ENCODE measurements at regions of chr19 and their contacts with region 1.

Region 1: DNA sequence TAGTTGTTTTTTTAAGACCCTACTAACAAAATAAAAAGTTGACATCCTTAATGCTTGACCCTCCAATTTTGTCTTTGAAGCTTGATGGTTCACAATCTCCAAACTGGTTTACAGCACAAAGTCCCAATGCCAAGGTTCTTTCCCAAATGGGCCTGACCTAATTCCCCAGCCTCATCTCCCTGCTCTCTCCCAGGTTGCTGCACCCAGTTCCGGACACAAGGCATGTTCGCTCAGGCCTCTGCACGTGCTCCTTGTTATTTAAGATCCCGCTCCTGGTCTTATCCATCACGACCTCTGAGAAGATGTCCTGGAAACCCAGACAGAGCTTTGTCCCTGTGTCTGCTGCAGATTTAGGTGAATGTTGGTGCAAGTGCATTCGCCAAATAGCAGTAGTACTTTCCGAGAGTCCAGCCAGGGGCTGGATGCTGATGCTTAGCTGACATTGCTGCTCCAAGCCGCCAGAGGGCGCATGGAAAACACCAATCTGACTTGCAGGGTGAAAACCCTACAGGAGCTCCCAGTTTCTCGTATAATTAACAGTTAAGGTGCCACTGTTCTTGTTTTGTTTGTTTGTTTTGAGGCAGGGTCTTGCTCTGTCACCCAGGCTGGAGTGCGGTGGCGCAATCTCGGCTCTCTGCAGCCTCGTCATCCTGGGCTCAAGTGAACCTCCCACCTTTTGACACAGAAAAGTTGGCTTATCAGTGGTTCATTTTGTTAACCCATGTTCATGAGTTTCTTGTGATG is 18.5 kb downstream of the LYPD3 start:
- DNase-seq: peak; percentile 65
- ATAC-seq: peak; percentile 95
- H3K4me3 ChIP-seq: no peak overlapping the region
- H3K27ac ChIP-seq: no peak overlapping the region
- H3K4me1 ChIP-seq: 0 out of 2 replicates have a peak, but pooled peaks cover 2% of the 10 kb centered on the region
- H3K27me3 ChIP-seq: no peaks in the 10 kb centered on the region
- CTCF ChIP-seq: peak; percentile 94
- POLR2A ChIP-seq: no peak
- RAD21 ChIP-seq: peak; percentile 94

Region 2: GRCh38 chr19:43503501-43504425 is 56.8 kb after region 1 on chr19:
- CTCF ChIA-PET with region 1: interaction called, 4 read pairs
- POLR2A ChIA-PET with region 1: interaction called, 5 read pairs
- dilution Hi-C with region 1: no loop called
- in situ Hi-C with region 1: no loop called
- intact Hi-C with region 1: loop called (anchors 1 kb)
- DNase-seq: peak; percentile 84
- ATAC-seq: peak; percentile 99
- H3K4me3 ChIP-seq: peak overlapping the region; percentile 88
- H3K27ac ChIP-seq: peak overlapping the region; percentile 82
- H3K4me1 ChIP-seq: peaks cover 4% of the 10 kb centered on the region; the same call in 1 of the 2 replicates
- H3K27me3 ChIP-seq: no peaks in the 10 kb centered on the region
- CTCF ChIP-seq: 0 out of 2 replicates have a peak, but pooled peaks have one; percentile 6
- POLR2A ChIP-seq: peak; percentile 60
- RAD21 ChIP-seq: no peak

Region 3: DNA sequence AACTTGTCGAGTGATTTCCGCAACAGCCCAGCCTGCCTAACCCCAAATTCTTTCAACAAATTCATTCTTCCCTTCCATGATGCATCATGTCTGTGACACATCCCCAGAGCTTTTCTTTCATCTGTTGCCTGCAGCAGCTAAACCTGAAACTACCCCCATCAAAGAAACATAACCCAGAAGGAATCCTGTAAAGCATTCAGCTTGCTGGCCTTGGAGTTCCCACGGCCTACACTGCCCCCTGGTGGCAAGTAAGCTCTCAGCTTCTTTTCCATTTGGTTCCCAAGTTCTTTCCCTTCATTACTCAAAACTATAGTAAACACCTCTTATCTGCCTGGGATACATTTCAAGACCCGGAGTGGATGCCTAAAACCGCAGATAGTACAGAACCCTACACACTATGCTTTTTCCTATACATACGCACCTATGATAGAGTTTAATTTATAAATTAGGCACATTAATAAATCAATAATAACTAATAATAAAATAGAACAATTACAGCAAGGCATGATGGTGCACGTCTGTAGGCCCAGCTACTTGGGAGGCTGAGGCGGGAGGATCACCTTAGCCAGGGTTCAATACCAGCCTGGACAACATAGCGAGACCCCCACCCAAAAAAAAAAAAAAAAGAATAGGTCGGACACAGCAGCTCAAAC is 72.6 kb after region 1 on chr19:
- CTCF ChIA-PET with region 1: interaction called, 23 read pairs
- POLR2A ChIA-PET with region 1: interaction called, 13 read pairs
- dilution Hi-C with region 1: no loop called
- in situ Hi-C with region 1: loop called (anchors 5 kb)
- intact Hi-C with region 1: loop called (anchors 1 kb)
- DNase-seq: peak; percentile 97
- ATAC-seq: peak; percentile 91
- H3K4me3 ChIP-seq: no peak overlapping the region
- H3K27ac ChIP-seq: no peak overlapping the region
- H3K4me1 ChIP-seq: no peaks in the 10 kb centered on the region
- H3K27me3 ChIP-seq: no peaks in the 10 kb centered on the region
- CTCF ChIP-seq: peak; percentile 98
- POLR2A ChIP-seq: no peak
- RAD21 ChIP-seq: peak; percentile 98

Region 4: GRCh38 chr19:43526884-43527859 is 80.3 kb after region 1 on chr19 and contains the start of gene ETHE1:
- CTCF ChIA-PET with region 1: interaction called, 13 read pairs
- POLR2A ChIA-PET with region 1: no interaction called
- dilution Hi-C with region 1: no loop called
- in situ Hi-C with region 1: loop called (anchors 5 kb)
- intact Hi-C with region 1: no loop called
- DNase-seq: peak; percentile 31
- ATAC-seq: peak; percentile 90
- H3K4me3 ChIP-seq: peak within 1 kb of the TSS; percentile 96
- H3K27ac ChIP-seq: peak within 1 kb of the TSS; percentile 78
- H3K4me1 ChIP-seq: peaks cover 4% of the 10 kb centered on the region
- H3K27me3 ChIP-seq: no peaks in the 10 kb centered on the region
- CTCF ChIP-seq: no peak
- POLR2A ChIP-seq: peak; percentile 60
- RAD21 ChIP-seq: no peak
- total RNA-seq, gene ETHE1: 141 and 161 TPM in 2 replicates

Region 5: DNA sequence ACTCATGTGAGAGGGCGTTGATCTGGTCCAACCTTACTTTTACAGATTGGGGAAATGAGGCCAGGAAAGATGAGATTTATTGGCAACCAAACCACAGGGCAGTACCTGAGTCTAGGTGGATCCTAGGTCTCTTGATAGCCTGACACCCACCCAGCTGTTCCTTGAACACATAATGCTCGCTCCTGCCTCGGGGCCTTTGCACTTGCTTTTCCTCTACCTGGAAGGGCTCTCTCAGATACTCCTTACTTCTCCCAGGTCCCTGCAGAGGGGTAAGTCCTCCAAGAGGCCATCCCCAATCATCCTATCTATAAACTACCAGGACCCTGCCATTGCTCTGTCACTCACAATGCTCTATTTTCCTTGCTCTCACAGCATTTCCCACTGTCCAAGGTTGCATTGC is 93.5 kb after region 1 on chr19:
- CTCF ChIA-PET with region 1: no interaction called
- POLR2A ChIA-PET with region 1: no interaction called
- dilution Hi-C with region 1: no loop called
- in situ Hi-C with region 1: no loop called
- intact Hi-C with region 1: no loop called
- DNase-seq: no peak
- ATAC-seq: no peak
- H3K4me3 ChIP-seq: no peak overlapping the region
- H3K27ac ChIP-seq: no peak overlapping the region
- H3K4me1 ChIP-seq: no peaks in the 10 kb centered on the region
- H3K27me3 ChIP-seq: no peaks in the 10 kb centered on the region
- CTCF ChIP-seq: no peak
- POLR2A ChIP-seq: no peak
- RAD21 ChIP-seq: no peak

Region 6: DNA sequence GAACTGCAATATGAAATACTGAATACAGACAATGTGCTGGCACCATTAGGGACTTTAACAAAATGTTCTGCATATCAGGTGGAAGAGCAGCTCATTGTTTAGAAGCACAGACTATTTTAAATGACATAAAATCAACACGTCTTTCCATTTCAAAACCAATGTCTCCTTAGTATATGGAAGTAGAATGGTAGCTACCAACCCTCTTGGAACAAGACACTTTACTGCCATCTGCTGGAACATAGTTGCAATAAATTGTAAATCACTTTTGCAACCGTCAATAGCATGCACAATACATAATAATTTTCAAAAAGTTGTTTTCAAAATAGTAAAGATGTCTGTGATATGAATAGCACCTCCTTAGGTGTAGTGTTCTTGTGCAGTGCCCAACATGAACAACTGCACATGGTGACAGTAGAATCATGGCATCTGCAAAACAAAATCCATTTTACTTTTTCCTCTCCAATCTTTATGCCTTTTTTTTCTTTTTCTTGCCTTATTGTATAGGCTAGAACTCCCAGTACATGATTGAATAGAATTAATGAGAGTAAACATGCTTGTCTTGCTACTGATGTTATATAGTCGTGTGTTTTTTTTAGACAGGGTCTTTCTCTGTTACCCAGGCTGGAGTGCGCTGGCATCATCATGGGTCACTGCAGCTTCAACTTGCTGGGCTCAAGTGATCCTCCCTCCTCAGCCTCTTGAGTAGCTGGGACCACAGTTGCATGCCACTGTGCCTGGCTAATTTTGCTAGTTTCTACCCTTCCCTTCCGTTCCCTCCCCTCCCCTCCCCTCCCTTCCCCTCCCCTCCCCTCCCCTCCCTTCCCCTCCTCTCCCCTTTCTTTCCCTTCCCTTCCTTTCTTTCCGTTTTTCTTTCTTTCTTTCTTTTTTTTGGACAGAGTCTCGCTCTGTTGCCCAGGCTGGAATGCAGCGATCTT is 363.1 kb after region 1 on chr19:
- CTCF ChIA-PET with region 1: no interaction called
- POLR2A ChIA-PET with region 1: no interaction called
- dilution Hi-C with region 1: no loop called
- in situ Hi-C with region 1: no loop called
- intact Hi-C with region 1: loop called (anchors 10 kb)
- DNase-seq: peak; percentile 74
- ATAC-seq: peak; percentile 85
- H3K4me3 ChIP-seq: no peak overlapping the region
- H3K27ac ChIP-seq: no peak overlapping the region
- H3K4me1 ChIP-seq: no peaks in the 10 kb centered on the region
- H3K27me3 ChIP-seq: peaks cover 10% of the 10 kb centered on the region
- CTCF ChIP-seq: peak; percentile 73
- POLR2A ChIP-seq: no peak
- RAD21 ChIP-seq: peak; percentile 75

Measured in IMR-90 (cell line).